Naive thymus-derived CD4-positive, alpha-beta T cell (primary cell): ENCODE measurements at regions of chr21 and their contacts with region 1.

Region 1: GRCh38 chr21:34888569-34889319 is 160.4 kb downstream of the RUNX1 start:
- DNase-seq: peak; percentile 59 to 90 (median 62)
- ATAC-seq: peak; percentile 61
- H3K4me3 ChIP-seq: peak overlapping the region; percentile 72
- H3K4me3 Mint-ChIP-seq: peak overlapping the region; percentile 89 to 100 (median 96)
- H3K27ac ChIP-seq: peak overlapping the region; percentile 86
- H3K27ac Mint-ChIP-seq: peak overlapping the region; percentile 95 to 100 (median 99)
- H3K4me1 ChIP-seq: peaks cover 22 to 25% of the 10 kb centered on the region in 2 donors
- H3K4me1 Mint-ChIP-seq: peaks cover 15 to 70% (median 61%) of the 10 kb centered on the region in 7 donors
- H3K27me3 ChIP-seq: no peaks in the 10 kb centered on the region
- H3K27me3 Mint-ChIP-seq: peaks cover 0 to 16% (median 0%) of the 10 kb centered on the region in 5 donors

Region 2: DNA sequence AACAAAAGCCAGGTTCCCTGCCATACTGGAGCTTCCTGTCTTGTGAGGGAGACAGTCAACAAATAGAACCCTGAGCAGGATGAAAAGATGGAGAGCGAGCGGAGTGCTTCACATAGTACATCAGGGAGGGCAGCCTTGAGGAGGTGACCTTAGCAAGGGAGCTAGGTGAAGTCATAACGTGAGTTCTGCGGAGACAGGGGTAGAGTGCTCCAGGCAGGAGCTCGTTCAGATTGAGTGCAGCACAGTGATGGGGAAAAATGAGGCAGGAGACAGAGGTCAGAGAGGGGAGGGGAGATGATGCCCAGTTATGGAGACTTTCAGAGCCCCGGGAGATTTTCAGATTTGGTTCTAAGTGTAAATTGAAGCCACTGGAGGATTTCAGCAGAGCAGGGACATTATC is 235.2 kb before region 1 on chr21:
- CTCF ChIA-PET with region 1: no interaction called
- POLR2A ChIA-PET with region 1: no interaction called
- intact Hi-C with region 1: no loop called
- DNase-seq: no peak
- ATAC-seq: no peak
- H3K4me3 ChIP-seq: no peak overlapping the region
- H3K4me3 Mint-ChIP-seq: no peak overlapping the region
- H3K27ac ChIP-seq: no peak overlapping the region
- H3K27ac Mint-ChIP-seq: peak overlapping the region in 1 of 9 donors; percentile 26
- H3K4me1 ChIP-seq: no peaks in the 10 kb centered on the region
- H3K4me1 Mint-ChIP-seq: peaks cover 0 to 2% (median 0%) of the 10 kb centered on the region in 7 donors
- H3K27me3 ChIP-seq: no peaks in the 10 kb centered on the region
- H3K27me3 Mint-ChIP-seq: peaks cover 43 to 58% (median 54%) of the 10 kb centered on the region in 5 donors

Region 3: DNA sequence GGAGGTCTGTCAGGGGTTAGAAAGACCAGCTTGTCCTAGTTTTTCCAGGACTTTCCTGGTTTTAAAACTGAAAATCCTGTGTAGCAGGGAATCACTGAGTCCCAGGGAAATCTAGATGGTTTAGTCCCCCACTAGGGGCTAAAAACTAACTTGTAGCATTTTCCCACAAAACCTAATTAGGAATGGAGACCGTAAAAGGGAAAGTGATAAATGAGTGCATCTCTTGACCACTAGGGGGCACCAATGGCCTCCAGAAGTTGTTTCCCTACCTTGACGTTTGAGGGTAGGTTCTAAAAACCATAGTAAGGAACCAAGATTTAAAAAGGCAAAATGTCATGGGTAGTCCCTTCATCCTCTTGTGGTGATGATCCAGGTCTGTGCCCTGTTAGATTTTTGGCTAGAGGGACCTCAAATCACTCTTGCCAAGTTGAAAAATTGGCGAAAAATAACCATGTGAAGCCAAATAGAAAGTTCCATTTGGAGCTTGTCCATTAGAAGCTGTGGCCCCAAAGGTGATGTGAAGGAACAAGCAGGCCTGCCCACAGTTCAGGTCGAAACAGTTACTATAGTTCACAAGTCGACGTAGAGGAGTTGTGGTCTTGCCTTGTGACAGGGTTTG is 195.4 kb before region 1 on chr21:
- CTCF ChIA-PET with region 1: interaction called, 6 read pairs
- POLR2A ChIA-PET with region 1: no interaction called
- intact Hi-C with region 1: loop called in 1 of 2 experiments (anchors 2 kb)
- DNase-seq: peak in 7 of 9 donors; percentile 33 to 63 (median 58)
- ATAC-seq: peak; percentile 72
- H3K4me3 ChIP-seq: no peak overlapping the region
- H3K4me3 Mint-ChIP-seq: no peak overlapping the region
- H3K27ac ChIP-seq: no peak overlapping the region
- H3K27ac Mint-ChIP-seq: no peak overlapping the region
- H3K4me1 ChIP-seq: no peaks in the 10 kb centered on the region
- H3K4me1 Mint-ChIP-seq: peaks cover 0 to 10% (median 3%) of the 10 kb centered on the region in 7 donors
- H3K27me3 ChIP-seq: peaks cover 0 to 4% of the 10 kb centered on the region in 2 donors
- H3K27me3 Mint-ChIP-seq: peaks cover 2 to 43% (median 10%) of the 10 kb centered on the region in 5 donors

Region 4: DNA sequence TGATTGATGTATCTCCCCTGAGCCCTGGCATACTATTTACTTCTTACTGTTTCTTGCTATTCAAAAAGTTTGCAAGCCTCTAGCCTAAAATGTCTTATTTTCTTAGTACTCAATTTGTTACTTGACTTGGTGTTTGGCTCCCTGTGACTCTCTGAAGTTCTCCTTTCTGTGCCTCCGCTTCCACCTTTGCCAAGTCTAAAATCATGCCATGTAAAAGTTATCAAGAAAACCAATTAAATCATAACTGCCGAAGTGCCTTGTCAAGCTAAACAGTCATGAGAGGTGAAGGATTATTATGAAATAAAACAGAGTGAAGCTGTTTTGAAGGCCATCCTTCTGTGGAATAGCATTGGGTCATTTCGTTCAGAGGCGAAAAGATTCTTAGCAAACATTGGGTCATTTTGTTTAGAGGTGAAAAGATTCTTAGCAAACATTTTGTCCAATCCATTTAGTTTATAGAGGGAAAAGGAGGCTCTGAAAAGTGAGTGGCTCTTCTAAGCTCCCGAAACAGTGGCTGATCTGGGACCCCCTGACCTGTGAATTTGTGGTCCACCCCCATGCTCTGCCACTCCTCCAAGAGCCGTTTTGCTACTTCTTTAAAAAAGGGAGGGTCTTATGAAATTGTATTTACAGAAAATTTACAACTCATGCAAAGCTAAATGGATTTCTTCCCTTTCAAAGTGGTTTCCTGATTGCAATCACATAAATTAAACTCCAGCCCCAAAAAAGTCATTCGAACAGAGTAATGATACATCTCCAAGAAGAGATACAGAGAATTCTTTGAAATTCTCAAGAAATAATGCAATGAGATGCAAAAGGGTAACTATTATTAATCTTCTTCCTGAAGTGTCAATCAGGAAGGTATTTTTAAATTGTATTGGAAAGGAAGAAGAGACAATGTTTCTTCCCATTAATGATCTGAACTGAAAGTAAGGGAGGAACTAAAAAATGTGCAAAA is 19.0 kb after region 1 on chr21:
- CTCF ChIA-PET with region 1: interaction called, 4 read pairs
- POLR2A ChIA-PET with region 1: interaction called, 3 read pairs
- intact Hi-C with region 1: loop called in 1 of 2 experiments (anchors 2 kb)
- DNase-seq: no peak
- ATAC-seq: no peak
- H3K4me3 ChIP-seq: no peak overlapping the region
- H3K4me3 Mint-ChIP-seq: peak overlapping the region in 5 of 10 donors; percentile 17 to 48 (median 26)
- H3K27ac ChIP-seq: no peak overlapping the region
- H3K27ac Mint-ChIP-seq: peak overlapping the region in 8 of 9 donors; percentile 24 to 89 (median 62)
- H3K4me1 ChIP-seq: peaks cover 9 to 38% of the 10 kb centered on the region in 2 donors
- H3K4me1 Mint-ChIP-seq: peaks cover 35 to 89% (median 80%) of the 10 kb centered on the region in 7 donors
- H3K27me3 ChIP-seq: no peaks in the 10 kb centered on the region
- H3K27me3 Mint-ChIP-seq: peaks cover 0 to 8% (median 0%) of the 10 kb centered on the region in 5 donors

Region 5: DNA sequence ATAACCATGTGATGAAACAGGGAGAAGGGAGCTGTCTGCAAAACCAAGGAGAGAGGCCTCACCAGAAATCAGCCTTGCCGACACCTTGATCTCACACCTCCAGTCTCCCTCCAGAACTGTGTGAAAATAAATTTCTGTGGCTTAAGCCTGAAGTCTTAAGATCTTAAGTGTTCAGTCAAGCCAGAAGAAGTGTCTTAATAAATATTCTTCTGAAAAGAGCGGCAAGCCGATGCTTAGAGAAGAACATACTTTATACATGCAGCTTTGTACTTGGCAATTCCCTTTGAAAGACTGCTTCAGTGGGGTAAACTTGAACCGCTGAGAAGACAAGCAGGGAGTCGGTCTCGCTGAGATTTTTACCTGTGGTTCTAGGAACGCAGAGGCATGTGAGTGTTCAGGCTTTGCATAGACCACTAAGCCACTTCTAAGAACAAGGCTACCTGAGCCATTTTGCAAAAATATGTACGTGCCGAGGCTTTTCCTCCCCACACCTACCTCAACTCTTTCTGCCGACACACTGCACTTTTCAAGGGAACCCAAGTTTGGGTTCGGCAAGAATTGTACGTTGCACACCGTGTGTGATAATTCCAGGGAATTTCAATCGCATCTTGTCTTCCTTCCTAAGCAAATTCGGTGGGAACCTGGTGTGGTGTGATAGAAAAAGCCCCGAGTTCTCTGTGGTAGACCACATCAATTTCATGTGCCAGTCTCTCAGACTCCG is 157.0 kb after region 1 on chr21:
- CTCF ChIA-PET with region 1: interaction called, 71 read pairs
- POLR2A ChIA-PET with region 1: interaction called, 51 read pairs
- intact Hi-C with region 1: loop called (anchors 1 kb)
- DNase-seq: peak in 7 of 9 donors; percentile 77 to 89 (median 85)
- ATAC-seq: peak; percentile 55
- H3K4me3 ChIP-seq: peak overlapping the region; percentile 76
- H3K4me3 Mint-ChIP-seq: peak overlapping the region; percentile 90 to 99 (median 97)
- H3K27ac ChIP-seq: peak overlapping the region; percentile 77
- H3K27ac Mint-ChIP-seq: peak overlapping the region; percentile 93 to 100 (median 98)
- H3K4me1 ChIP-seq: peaks cover 63 to 65% of the 10 kb centered on the region in 2 donors
- H3K4me1 Mint-ChIP-seq: peaks cover 58 to 90% (median 72%) of the 10 kb centered on the region in 7 donors
- H3K27me3 ChIP-seq: no peaks in the 10 kb centered on the region
- H3K27me3 Mint-ChIP-seq: peaks cover 0 to 3% (median 0%) of the 10 kb centered on the region in 5 donors

Region 6: DNA sequence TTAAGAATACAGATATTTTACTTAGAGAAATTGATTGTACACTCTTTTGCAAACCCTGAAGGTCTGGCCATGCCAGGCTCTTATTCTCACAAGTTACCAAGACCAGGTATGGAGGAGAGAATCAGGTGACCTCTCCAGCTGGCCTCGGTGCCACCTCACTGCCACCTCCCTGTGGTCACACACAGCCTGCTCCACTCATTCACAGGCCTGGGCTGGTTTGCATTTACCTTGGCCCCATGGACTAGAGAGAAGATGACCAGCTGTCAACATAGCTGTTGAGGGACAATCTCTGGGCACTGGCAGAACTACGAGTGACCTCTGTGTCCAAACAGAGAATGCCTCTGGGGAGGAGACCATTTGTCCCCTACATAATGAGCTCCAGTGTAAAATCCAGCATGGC is 451.5 kb after region 1 on chr21:
- CTCF ChIA-PET with region 1: no interaction called
- POLR2A ChIA-PET with region 1: no interaction called
- intact Hi-C with region 1: loop called in 1 of 2 experiments (anchors 1 kb)
- DNase-seq: peak in 1 of 9 donors; percentile 8
- ATAC-seq: no peak
- H3K4me3 ChIP-seq: no peak overlapping the region
- H3K4me3 Mint-ChIP-seq: no peak overlapping the region
- H3K27ac ChIP-seq: no peak overlapping the region
- H3K27ac Mint-ChIP-seq: no peak overlapping the region
- H3K4me1 ChIP-seq: no peaks in the 10 kb centered on the region
- H3K4me1 Mint-ChIP-seq: peaks cover 0 to 14% (median 5%) of the 10 kb centered on the region in 7 donors
- H3K27me3 ChIP-seq: no peaks in the 10 kb centered on the region
- H3K27me3 Mint-ChIP-seq: peaks cover 0 to 8% (median 0%) of the 10 kb centered on the region in 5 donors

Region 7: GRCh38 chr21:35833991-35834390 is 945.2 kb after region 1 on chr21:
- CTCF ChIA-PET with region 1: no interaction called
- POLR2A ChIA-PET with region 1: no interaction called
- intact Hi-C with region 1: loop called in 1 of 2 experiments (anchors 10 kb)
- DNase-seq: no peak
- ATAC-seq: no peak
- H3K4me3 ChIP-seq: no peak overlapping the region
- H3K4me3 Mint-ChIP-seq: no peak overlapping the region
- H3K27ac ChIP-seq: no peak overlapping the region
- H3K27ac Mint-ChIP-seq: peak overlapping the region in 1 of 9 donors; percentile 20
- H3K4me1 ChIP-seq: peaks cover 0 to 4% of the 10 kb centered on the region in 2 donors
- H3K4me1 Mint-ChIP-seq: peaks cover 3 to 24% (median 14%) of the 10 kb centered on the region in 7 donors
- H3K27me3 ChIP-seq: no peaks in the 10 kb centered on the region
- H3K27me3 Mint-ChIP-seq: peaks cover 0 to 25% (median 12%) of the 10 kb centered on the region in 5 donors